ENCODE measurements at regions of chr7 and their contacts with region 1.

Region 1: GRCh38 chr7:21427182-21427870 is 557 bp upstream of the SP4 start:
- DNase-seq: peak; percentile 99
- H3K4me3 ChIP-seq: peak overlapping the region; percentile 54 to 65 (median 55)
- H3K27ac ChIP-seq: peak overlapping the region; percentile 89
- H3K4me1 ChIP-seq: peaks cover 17% of the 10 kb centered on the region
- H3K27me3 ChIP-seq: no peaks in the 10 kb centered on the region
- CTCF ChIP-seq: no peak
- POLR2A ChIP-seq: peak; percentile 59

Region 2: DNA sequence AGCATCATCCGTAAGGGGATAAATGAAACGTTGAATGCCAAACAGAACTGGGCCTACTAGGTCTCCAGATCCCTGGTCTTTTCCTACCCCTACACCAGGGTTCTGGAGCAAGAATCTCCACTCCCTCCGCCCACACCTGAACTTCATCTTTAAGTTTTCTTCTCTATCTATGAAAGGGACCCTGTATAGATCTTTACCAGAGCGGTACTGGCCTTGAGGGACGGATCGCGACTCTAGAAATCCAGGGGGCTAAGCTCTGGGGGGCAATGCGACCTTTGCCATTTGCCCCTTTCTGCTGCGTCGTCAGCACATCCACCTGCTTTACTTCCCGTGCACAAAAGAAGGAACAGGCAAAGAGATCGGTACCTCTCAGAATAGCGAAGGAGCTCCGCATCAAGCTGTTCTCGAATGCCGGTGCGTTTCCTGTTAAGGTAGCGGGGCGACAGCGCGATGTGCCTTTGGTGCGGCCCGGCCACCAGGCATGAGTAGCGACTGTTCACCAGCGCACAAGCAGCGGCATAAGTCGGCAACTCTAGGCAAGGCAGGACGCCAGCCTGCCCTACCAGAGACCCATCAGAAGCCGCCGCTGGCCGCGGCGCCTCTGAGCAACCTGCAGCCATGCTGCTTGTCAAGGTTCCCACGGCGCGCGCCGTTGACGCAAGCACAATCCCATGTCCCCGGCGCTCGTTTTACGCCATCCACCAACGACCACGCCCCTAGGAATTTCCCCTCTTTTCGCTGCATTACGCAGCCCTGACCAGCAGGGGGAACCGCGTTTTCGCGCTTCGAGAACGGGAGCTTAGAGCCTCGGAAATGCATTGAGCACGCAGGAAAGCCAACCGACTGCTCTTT is 1718.7 kb before region 1 on chr7 and contains the start of gene POLR1F:
- CTCF ChIA-PET with region 1: no interaction called
- POLR2A ChIA-PET with region 1: no interaction called
- dilution Hi-C with region 1: no loop called
- intact Hi-C with region 1: loop called (anchors 5 kb)
- DNase-seq: peak; percentile 97
- H3K4me3 ChIP-seq: peak within 1 kb of the TSS; percentile 45 to 83 (median 77)
- H3K27ac ChIP-seq: peak within 1 kb of the TSS; percentile 44
- H3K4me1 ChIP-seq: peaks cover 19% of the 10 kb centered on the region
- H3K27me3 ChIP-seq: peaks cover 0 to 12% of the 10 kb centered on the region in 2 experiments
- CTCF ChIP-seq: peak; percentile 88 to 92
- POLR2A ChIP-seq: peak; percentile 92
- total RNA-seq, gene POLR1F: 21.0 and 27.0 TPM in 2 replicates

Region 3: DNA sequence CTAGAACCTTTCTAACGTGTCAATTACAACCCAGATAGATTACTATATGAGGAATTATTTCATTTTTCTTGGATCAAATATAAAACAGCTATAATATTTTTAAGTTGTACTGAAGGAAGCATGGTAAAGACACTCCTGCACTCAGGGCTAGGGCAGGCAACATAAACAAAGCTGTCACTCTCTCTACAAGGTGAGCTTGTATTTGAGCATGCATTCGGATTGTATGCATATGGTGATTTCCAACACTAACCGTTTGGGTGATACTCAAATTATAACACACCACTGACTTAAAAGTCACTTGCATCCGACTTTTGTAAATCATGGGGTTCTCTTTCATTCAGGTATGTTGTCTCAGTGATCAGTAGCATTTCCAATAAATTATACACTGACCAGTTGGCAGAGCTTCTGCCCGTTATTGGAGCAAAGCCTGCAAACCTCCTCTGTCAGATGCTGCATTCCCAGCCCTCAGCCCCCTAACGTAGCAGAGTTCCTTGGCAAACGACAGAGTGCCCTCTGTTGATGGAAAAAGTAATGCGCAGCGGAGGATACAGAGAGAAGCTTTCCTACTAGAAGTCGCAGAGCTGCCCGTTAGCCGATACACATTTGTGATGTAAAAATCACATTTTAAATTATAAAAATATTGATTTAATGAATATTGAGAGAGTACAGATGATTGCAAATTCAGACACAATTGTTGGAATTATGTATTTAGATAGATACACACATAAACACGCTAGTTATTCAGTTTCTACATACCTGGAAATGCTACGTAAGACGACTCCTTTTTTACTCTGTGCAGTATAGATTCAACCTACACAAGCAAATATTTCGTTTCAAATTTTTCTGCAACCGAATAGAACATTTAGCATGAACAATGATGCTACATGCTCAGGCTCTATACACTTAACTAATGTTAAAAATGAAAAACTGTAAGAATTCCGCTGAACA is 173.3 kb before region 1 on chr7:
- CTCF ChIA-PET with region 1: interaction called, 3 read pairs
- POLR2A ChIA-PET with region 1: no interaction called
- dilution Hi-C with region 1: no loop called
- intact Hi-C with region 1: loop called (anchors 1 kb)
- DNase-seq: peak; percentile 78
- H3K4me3 ChIP-seq: no peak overlapping the region
- H3K27ac ChIP-seq: no peak overlapping the region
- H3K4me1 ChIP-seq: no peaks in the 10 kb centered on the region
- H3K27me3 ChIP-seq: peaks cover 28 to 67% of the 10 kb centered on the region in 2 experiments
- CTCF ChIP-seq: peak; percentile 52 to 72
- POLR2A ChIP-seq: no peak

Region 4: DNA sequence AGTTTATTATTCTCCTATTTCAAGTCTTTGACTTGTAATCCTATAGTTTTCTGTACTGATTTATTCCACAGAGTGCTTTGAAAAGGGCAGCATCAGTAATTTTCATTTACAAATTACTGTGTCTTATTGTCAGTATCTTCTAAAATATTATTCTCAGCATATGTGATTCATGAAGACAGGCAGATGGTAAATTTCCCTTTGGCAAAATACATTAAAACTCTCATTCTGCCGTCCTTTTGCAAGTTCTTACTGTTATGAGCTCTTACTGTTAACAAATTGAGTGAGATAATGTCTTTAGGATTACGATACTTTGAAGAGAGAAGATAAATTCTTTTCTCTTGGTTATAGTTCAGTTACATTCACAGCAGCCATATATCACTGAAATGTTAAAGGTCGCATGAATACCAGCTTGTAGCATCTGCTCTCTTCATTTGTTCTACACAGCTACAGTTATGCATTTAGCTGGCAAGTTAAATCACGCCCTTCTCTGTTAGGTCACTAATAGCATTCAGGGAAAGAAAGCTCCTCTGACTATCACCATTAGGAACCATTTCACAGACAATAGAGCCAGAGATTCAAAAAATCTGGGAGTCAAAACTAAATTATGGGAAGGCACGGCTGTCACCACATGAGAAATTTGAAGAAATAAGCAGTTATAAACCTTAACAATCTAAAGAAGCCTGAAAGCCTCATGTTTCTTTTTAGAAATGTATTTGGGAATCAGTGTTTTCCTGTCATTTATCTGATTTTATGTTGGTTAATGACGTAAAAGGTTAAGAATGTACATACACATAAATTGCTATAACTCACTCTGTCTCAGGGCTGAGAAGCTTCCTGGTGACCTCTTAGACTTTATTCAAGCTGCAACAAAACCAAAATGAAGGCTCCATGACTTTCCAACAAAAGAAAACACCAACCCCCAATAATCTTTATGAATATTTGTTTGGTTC is 109.1 kb before region 1 on chr7:
- CTCF ChIA-PET with region 1: interaction called, 7 read pairs
- POLR2A ChIA-PET with region 1: interaction called, 17 read pairs
- dilution Hi-C with region 1: no loop called
- intact Hi-C with region 1: loop called (anchors 1 kb)
- DNase-seq: peak; percentile 89
- H3K4me3 ChIP-seq: peak overlapping the region in 1 of 3 experiments; percentile 19
- H3K27ac ChIP-seq: peak overlapping the region; percentile 96
- H3K4me1 ChIP-seq: peaks cover 44% of the 10 kb centered on the region
- H3K27me3 ChIP-seq: no peaks in the 10 kb centered on the region
- CTCF ChIP-seq: no peak
- POLR2A ChIP-seq: no peak

Region 5: DNA sequence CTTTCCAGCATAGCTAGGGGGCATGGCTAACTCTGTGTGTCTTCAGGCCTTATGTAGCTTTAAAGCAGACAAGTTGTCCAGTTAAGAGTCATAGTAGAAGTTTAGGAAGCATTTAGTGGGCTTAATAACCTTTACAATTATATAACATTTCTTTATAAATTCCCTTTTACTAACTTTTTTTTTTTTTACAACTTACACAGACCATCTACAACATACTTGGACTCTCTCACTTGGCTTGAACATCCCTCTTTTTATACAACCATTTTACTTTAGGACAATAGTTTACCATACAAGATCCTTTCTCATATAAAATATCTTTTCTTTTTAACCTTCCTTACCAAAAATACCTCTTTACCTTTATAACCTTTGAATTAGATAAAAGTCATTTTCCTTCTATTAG is 26.9 kb after region 1 on chr7:
- CTCF ChIA-PET with region 1: no interaction called
- POLR2A ChIA-PET with region 1: no interaction called
- dilution Hi-C with region 1: no loop called
- intact Hi-C with region 1: no loop called
- DNase-seq: no peak
- H3K4me3 ChIP-seq: no peak overlapping the region
- H3K27ac ChIP-seq: no peak overlapping the region
- H3K4me1 ChIP-seq: no peaks in the 10 kb centered on the region
- H3K27me3 ChIP-seq: no peaks in the 10 kb centered on the region
- CTCF ChIP-seq: no peak
- POLR2A ChIP-seq: no peak

Region 6: DNA sequence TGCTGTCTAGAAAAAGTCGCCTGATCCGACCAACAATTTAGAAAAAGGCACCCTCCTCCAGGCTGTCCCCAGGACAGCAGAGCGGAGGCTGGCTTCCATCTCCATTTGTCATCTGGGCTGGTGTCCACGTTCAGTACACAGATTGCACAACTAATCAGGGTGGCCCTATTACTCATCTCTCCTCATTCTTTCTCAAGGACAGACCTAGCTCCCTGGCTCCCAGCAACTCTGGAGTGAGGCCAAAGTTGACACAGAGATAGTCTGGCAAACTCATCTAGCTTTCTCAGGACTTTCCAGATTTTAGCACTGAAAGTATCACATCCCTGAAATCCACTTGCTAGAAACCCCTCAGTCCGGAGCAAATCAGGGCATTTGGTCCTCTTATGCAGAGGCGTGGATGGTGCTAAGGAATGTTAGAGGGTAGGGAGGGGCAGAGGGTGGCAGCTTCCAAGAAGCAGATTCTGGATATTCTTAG is 190.6 kb after region 1 on chr7:
- CTCF ChIA-PET with region 1: no interaction called
- POLR2A ChIA-PET with region 1: no interaction called
- dilution Hi-C with region 1: no loop called
- intact Hi-C with region 1: loop called (anchors 1 kb)
- DNase-seq: peak; percentile 30
- H3K4me3 ChIP-seq: no peak overlapping the region
- H3K27ac ChIP-seq: peak overlapping the region; percentile 84
- H3K4me1 ChIP-seq: peaks cover 21% of the 10 kb centered on the region
- H3K27me3 ChIP-seq: no peaks in the 10 kb centered on the region
- CTCF ChIP-seq: no peak
- POLR2A ChIP-seq: no peak

Region 7: GRCh38 chr7:22082886-22083703 is 655.8 kb after region 1 on chr7:
- CTCF ChIA-PET with region 1: interaction called, 7 read pairs
- POLR2A ChIA-PET with region 1: interaction called, 5 read pairs
- dilution Hi-C with region 1: no loop called
- intact Hi-C with region 1: loop called (anchors 1 kb)
- DNase-seq: peak; percentile 86
- H3K4me3 ChIP-seq: peak overlapping the region; percentile 22 to 69 (median 66)
- H3K27ac ChIP-seq: peak overlapping the region; percentile 6
- H3K4me1 ChIP-seq: peaks cover 11% of the 10 kb centered on the region
- H3K27me3 ChIP-seq: peaks cover 10 to 19% of the 10 kb centered on the region in 2 experiments
- CTCF ChIP-seq: peak; percentile 98 to 99
- POLR2A ChIP-seq: peak; percentile 69

Region 8: GRCh38 chr7:22173685-22174573 is 746.6 kb after region 1 on chr7:
- CTCF ChIA-PET with region 1: no interaction called
- POLR2A ChIA-PET with region 1: no interaction called
- dilution Hi-C with region 1: no loop called
- intact Hi-C with region 1: no loop called
- DNase-seq: peak; percentile 44
- H3K4me3 ChIP-seq: no peak overlapping the region
- H3K27ac ChIP-seq: no peak overlapping the region
- H3K4me1 ChIP-seq: no peaks in the 10 kb centered on the region
- H3K27me3 ChIP-seq: no peaks in the 10 kb centered on the region
- CTCF ChIP-seq: no peak
- POLR2A ChIP-seq: no peak

Measured in endothelial cell of umbilical vein (primary cell).